ENCODE measurements at regions of chr14 and their contacts with region 1.

Region 1: GRCh38 chr14:65824285-65824977 is 411.9 kb downstream of the FUT8 start:
- DNase-seq: peak; percentile 62 to 70 (median 64)
- H3K4me3 ChIP-seq: no peak overlapping the region
- H3K4me3 Mint-ChIP-seq: peak overlapping the region in 1 of 8 donors; percentile 10
- H3K27ac ChIP-seq: no peak overlapping the region
- H3K27ac Mint-ChIP-seq: no peak overlapping the region
- H3K4me1 ChIP-seq: peaks cover 9% of the 10 kb centered on the region
- H3K4me1 Mint-ChIP-seq: peaks cover 10 to 14% (median 11%) of the 10 kb centered on the region in 4 donors
- H3K27me3 ChIP-seq: no peaks in the 10 kb centered on the region
- H3K27me3 Mint-ChIP-seq: no peaks in the 10 kb centered on the region

Region 2: GRCh38 chr14:65164068-65164824 is 660.2 kb before region 1 on chr14:
- CTCF ChIA-PET with region 1: interaction called, 66 read pairs
- POLR2A ChIA-PET with region 1: interaction called, 7 read pairs
- intact Hi-C with region 1: loop called (anchors 1 kb)
- DNase-seq: peak in 4 of 5 donors; percentile 57 to 64 (median 59)
- H3K4me3 ChIP-seq: no peak overlapping the region
- H3K4me3 Mint-ChIP-seq: no peak overlapping the region
- H3K27ac ChIP-seq: no peak overlapping the region
- H3K27ac Mint-ChIP-seq: no peak overlapping the region
- H3K4me1 ChIP-seq: no peaks in the 10 kb centered on the region
- H3K4me1 Mint-ChIP-seq: peaks cover 0 to 7% (median 5%) of the 10 kb centered on the region in 4 donors
- H3K27me3 ChIP-seq: no peaks in the 10 kb centered on the region
- H3K27me3 Mint-ChIP-seq: no peaks in the 10 kb centered on the region

Region 3: GRCh38 chr14:65810322-65810721 is 14.1 kb before region 1 on chr14:
- CTCF ChIA-PET with region 1: interaction called, 37 read pairs
- POLR2A ChIA-PET with region 1: no interaction called
- intact Hi-C with region 1: no loop called
- DNase-seq: no peak
- H3K4me3 ChIP-seq: no peak overlapping the region
- H3K4me3 Mint-ChIP-seq: no peak overlapping the region
- H3K27ac ChIP-seq: no peak overlapping the region
- H3K27ac Mint-ChIP-seq: no peak overlapping the region
- H3K4me1 ChIP-seq: no peaks in the 10 kb centered on the region
- H3K4me1 Mint-ChIP-seq: peaks cover 0 to 5% (median 0%) of the 10 kb centered on the region in 4 donors
- H3K27me3 ChIP-seq: no peaks in the 10 kb centered on the region
- H3K27me3 Mint-ChIP-seq: no peaks in the 10 kb centered on the region

Region 4: GRCh38 chr14:65847075-65847847 is 22.8 kb after region 1 on chr14:
- CTCF ChIA-PET with region 1: interaction called, 83 read pairs
- POLR2A ChIA-PET with region 1: interaction called, 21 read pairs
- intact Hi-C with region 1: loop called (anchors 1 kb)
- DNase-seq: peak; percentile 88 to 93 (median 90)
- H3K4me3 ChIP-seq: peak overlapping the region; percentile 30 to 43
- H3K4me3 Mint-ChIP-seq: peak overlapping the region; percentile 65 to 90 (median 80)
- H3K27ac ChIP-seq: peak overlapping the region; percentile 57
- H3K27ac Mint-ChIP-seq: peak overlapping the region; percentile 91 to 98 (median 96)
- H3K4me1 ChIP-seq: peaks cover 98% of the 10 kb centered on the region
- H3K4me1 Mint-ChIP-seq: peaks cover 64 to 92% (median 79%) of the 10 kb centered on the region in 4 donors
- H3K27me3 ChIP-seq: no peaks in the 10 kb centered on the region
- H3K27me3 Mint-ChIP-seq: no peaks in the 10 kb centered on the region

Region 5: DNA sequence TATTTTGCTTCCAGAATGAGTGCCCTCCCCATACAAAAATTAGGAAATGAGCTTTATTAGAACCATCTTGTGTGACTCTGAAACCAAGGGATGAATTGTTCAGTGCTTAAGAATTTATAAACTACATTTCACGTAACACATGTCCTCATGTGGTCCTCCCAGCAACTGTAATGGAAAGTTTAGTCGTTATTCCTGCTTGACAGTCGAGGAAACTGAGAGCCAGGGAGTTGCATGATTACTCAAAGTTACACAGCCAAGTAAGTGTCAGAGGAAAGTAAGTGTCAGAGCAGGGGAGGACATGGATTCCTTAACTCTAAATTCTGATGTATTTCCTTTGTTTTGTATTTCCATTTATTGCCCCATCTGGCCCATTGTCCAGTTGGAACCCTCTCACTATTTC is 42.0 kb after region 1 on chr14:
- CTCF ChIA-PET with region 1: interaction called, 14 read pairs
- POLR2A ChIA-PET with region 1: interaction called, 3 read pairs
- intact Hi-C with region 1: no loop called
- DNase-seq: no peak
- H3K4me3 ChIP-seq: no peak overlapping the region
- H3K4me3 Mint-ChIP-seq: no peak overlapping the region
- H3K27ac ChIP-seq: no peak overlapping the region
- H3K27ac Mint-ChIP-seq: no peak overlapping the region
- H3K4me1 ChIP-seq: peaks cover 33% of the 10 kb centered on the region
- H3K4me1 Mint-ChIP-seq: peaks cover 31 to 47% (median 37%) of the 10 kb centered on the region in 4 donors
- H3K27me3 ChIP-seq: no peaks in the 10 kb centered on the region
- H3K27me3 Mint-ChIP-seq: no peaks in the 10 kb centered on the region

Region 6: GRCh38 chr14:65940056-65940733 is 115.8 kb after region 1 on chr14:
- CTCF ChIA-PET with region 1: interaction called, 11 read pairs
- POLR2A ChIA-PET with region 1: no interaction called
- intact Hi-C with region 1: no loop called
- DNase-seq: no peak
- H3K4me3 ChIP-seq: no peak overlapping the region
- H3K4me3 Mint-ChIP-seq: no peak overlapping the region
- H3K27ac ChIP-seq: no peak overlapping the region
- H3K27ac Mint-ChIP-seq: no peak overlapping the region
- H3K4me1 ChIP-seq: peaks cover 58% of the 10 kb centered on the region
- H3K4me1 Mint-ChIP-seq: peaks cover 31 to 65% (median 55%) of the 10 kb centered on the region in 4 donors
- H3K27me3 ChIP-seq: no peaks in the 10 kb centered on the region
- H3K27me3 Mint-ChIP-seq: no peaks in the 10 kb centered on the region